Right ventricle myocardium superior (tissue), 1 donor: ENCODE measurements at regions of chr10 and their contacts with region 1.

Region 1: GRCh38 chr10:103859161-103860086 is 4.0 kb upstream of the SH3PXD2A start:
- DNase-seq: no peak
- ATAC-seq: peak; percentile 71

Region 2: DNA sequence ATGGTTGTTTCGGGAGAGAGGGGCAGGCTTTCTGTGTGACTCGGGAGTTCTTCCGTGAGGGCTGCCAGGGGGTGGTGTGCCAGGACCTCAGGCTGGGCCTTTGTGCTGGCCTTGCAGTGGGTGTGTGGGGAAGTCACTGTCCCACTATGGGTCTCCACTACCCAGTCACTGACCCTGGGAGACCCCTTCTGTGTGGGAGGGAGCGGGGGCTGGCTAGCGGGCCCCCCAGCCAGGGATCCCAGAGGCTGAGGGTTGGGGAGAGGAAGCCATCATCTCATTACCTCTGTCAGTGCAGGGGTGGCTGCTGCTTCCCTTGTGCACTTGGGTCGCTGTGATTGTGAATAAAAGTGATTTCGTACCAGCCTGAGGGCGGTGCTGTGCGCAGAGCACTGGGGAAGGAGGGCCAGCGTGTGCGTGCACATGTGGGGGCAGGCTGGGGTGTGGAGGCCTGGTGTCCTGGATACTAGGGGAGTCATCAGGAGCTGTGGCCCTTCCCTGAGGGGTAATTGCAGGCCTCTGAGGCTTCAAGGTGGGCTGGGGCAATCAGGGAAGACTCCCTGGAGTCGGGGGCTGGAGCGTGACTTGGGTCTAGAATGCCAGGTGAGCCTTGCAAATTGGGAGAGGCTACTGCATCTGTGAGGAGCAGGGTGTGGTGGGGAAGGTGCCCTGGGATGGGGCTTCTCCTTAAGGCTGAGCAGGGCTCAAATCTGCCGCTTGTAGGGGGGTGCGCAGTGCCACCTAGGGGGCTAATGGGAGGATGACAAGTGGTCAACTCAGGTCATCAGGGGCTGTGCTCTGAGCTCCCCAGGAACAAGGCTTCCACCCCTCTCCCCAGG is 267.0 kb before region 1 on chr10:
- intact Hi-C with region 1: loop called (anchors 10 kb)
- DNase-seq: no peak
- ATAC-seq: peak; percentile 52

Region 3: GRCh38 chr10:103712570-103713498 is 146.6 kb before region 1 on chr10:
- intact Hi-C with region 1: loop called (anchors 1 kb)
- DNase-seq: peak; percentile 82
- ATAC-seq: peak; percentile 91

Region 4: DNA sequence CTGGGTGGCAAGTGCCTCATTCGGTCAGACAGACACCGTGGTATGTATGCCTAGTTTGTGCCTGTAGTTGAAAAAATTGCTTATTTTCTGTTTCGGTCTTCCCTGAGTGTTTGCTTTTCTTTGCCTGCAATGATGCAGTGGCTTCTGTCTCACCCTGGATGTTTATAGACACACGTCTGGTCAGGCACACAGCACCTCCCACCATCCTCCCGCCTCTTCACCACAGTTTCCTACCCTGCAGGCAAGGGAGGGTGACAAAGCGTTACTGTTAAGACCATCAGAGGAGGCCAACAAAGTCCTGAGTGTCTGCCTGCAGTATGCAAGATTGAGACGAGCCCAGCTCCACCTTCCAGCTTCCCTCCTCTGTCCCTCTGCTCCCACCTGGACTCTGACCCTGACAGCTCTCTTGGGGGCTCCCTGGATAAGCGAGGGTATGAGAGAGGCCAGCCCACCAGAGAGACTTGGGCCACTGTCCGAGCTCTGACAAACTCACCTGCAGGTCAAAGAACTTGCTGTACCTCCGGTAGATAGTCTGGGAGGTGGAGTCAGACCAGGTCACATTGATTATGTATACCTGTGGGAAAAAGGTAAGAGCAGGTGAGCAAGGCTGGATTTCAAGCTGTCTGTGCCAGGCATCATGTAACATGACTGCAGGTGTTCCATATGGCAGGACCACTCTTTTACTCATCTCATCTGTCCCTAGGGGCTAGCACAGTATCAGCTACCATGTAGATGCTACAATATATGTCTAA is 58.5 kb before region 1 on chr10:
- intact Hi-C with region 1: no loop called
- DNase-seq: no peak
- ATAC-seq: no peak

Region 5: GRCh38 chr10:103820101-103821062 is 39.0 kb before region 1 on chr10:
- intact Hi-C with region 1: loop called (anchors 5 kb)
- DNase-seq: peak; percentile 91
- ATAC-seq: peak; percentile 91